GM12878 (cell line): ENCODE measurements at regions of chr17 and their contacts with region 1.

Region 1: DNA sequence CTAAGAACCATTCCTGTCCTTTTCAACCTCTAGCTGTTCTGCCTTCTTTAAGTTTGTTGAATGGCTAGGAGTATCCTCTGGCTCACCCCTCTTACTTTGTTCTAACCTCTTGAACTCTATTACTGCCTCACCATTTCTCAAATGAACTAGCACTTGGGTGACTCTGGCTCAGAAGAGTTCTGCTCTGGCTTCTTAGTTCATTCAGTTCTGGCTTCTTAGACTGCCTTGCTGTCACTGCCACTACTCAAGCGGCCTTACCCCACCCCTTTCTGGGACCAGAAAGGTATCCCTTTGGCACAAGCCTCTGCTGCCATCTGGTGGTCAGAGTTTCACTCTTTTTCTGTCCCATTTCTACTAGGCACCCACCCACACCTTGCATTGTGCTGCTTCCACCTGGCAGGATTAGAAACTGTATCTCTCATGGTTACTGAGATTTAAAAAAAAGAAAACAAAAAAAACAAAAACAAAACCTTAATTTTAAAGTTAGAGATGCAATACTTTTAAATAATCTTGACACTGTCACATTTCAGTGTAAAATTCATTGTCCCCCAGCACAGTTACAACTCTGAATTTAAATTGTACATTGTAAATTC is 6.8 kb upstream of the ABCA10 start:
- DNase-seq: peak; percentile 79
- ATAC-seq: peak; percentile 100
- H3K4me3 ChIP-seq: no peak overlapping the region
- H3K27ac ChIP-seq: 0 out of 2 replicates have a peak overlapping the region, but pooled peaks have one; percentile 27
- H3K4me1 ChIP-seq: peaks cover 4% of the 10 kb centered on the region; the same call in 1 of the 2 replicates
- H3K27me3 ChIP-seq: no peaks in the 10 kb centered on the region
- CTCF ChIP-seq: peak; percentile 71 to 89 (median 83)
- EP300 ChIP-seq: no peak
- POLR2A ChIP-seq: no peak
- RAD21 ChIP-seq: peak; percentile 97

Region 2: DNA sequence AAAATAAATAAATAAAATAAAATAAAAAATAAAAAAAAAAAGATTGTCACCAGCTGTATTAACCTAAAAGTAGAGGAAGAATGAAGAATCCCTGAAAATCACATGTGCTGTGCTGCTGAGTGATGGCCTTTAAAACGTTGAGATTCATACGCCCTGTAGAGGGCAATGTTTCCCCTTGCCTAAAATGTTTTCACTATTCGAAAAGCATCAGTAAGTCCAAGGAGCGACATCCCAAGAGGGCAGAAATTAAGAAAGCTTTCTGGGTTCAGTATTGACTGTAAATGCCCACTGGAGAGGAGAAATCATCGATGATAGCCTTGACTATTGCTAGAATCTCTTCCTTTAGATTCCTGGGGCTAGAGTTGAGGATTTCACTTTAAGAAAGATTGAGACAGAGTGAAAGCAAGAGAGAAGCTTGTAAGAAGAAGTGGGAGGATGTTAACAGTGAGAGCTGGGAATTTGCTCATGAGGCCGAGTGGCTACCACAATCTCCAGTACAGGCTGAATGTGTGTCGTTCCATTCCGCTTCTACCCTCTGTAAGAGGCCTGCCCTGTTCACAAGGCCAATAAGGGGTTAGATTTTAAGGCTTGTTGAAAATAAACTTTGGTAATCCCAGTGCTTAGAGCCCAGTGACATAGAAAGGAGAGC is 463.4 kb before region 1 on chr17:
- CTCF ChIA-PET with region 1: interaction called, 54 read pairs
- POLR2A ChIA-PET with region 1: interaction called, 3 read pairs
- RAD21 ChIA-PET with region 1: interaction called, 13 read pairs
- SMC1A ChIA-PET with region 1: interaction called, 29 read pairs
- in situ Hi-C with region 1: loop called (anchors 5 kb)
- intact Hi-C with region 1: loop called (anchors 1 kb)
- DNase-seq: no peak
- ATAC-seq: peak; percentile 90
- H3K4me3 ChIP-seq: peak overlapping the region; percentile 61
- H3K27ac ChIP-seq: peak overlapping the region; percentile 46
- H3K4me1 ChIP-seq: peaks cover 15% of the 10 kb centered on the region
- H3K27me3 ChIP-seq: no peaks in the 10 kb centered on the region
- CTCF ChIP-seq: peak; percentile 62 to 80 (median 76)
- EP300 ChIP-seq: no peak
- POLR2A ChIP-seq: no peak
- RAD21 ChIP-seq: peak; percentile 81

Region 3: GRCh38 chr17:68794636-68795434 is 440.6 kb before region 1 on chr17:
- CTCF ChIA-PET with region 1: interaction called, 22 read pairs
- POLR2A ChIA-PET with region 1: no interaction called
- RAD21 ChIA-PET with region 1: interaction called, 8 read pairs
- SMC1A ChIA-PET with region 1: interaction called, 10 read pairs
- in situ Hi-C with region 1: no loop called
- intact Hi-C with region 1: loop called (anchors 1 kb)
- DNase-seq: no peak
- ATAC-seq: peak; percentile 72
- H3K4me3 ChIP-seq: peak overlapping the region; percentile 7; the same call in 1 of the 2 replicates
- H3K27ac ChIP-seq: peak overlapping the region; percentile 38
- H3K4me1 ChIP-seq: peaks cover 4% of the 10 kb centered on the region; the same call in 1 of the 2 replicates
- H3K27me3 ChIP-seq: no peaks in the 10 kb centered on the region
- CTCF ChIP-seq: peak; percentile 10 to 41 (median 33); a peak in 3 of 6 replicates
- EP300 ChIP-seq: no peak
- POLR2A ChIP-seq: no peak
- RAD21 ChIP-seq: peak; percentile 48

Region 4: DNA sequence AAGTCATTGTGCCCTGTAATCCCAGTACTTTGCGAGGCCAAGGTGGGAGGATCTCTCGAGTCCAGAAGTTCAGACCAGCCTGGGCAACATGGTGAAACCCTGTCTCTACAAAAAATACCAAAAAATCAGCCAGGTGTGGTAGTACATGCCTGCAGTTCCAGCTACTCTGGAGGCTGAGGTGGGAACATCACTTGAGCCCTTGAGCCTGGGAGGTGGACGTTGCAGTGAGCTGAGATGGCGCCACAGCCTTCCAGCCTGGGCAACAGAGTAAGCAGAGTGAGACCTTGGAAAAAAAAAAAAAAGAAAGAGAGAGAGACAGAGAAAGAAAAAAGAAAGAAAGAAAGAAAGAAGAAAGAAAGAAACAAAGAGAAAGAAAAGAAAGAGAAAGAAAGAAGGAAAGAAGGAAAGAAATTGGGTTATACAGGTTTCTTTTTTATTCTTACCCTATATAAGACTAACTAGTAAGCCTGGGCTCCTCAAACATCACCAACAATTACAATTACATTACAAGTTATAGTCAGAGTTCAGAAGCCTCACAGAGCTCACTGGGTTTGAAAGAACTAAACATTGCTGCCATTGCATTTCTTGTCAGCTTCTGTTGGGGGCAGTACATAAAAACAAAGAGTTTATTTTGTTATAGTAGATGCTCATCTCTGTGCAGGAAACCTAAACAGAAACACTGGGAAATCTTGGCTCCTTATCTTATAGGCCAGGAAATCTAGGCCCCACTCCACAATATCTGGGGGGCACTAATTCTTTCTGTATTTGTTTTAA is 168.0 kb before region 1 on chr17:
- CTCF ChIA-PET with region 1: interaction called, 5 read pairs
- POLR2A ChIA-PET with region 1: interaction called, 3 read pairs
- RAD21 ChIA-PET with region 1: interaction called, 11 read pairs
- SMC1A ChIA-PET with region 1: interaction called, 6 read pairs
- in situ Hi-C with region 1: no loop called
- intact Hi-C with region 1: no loop called
- DNase-seq: no peak
- ATAC-seq: peak; percentile 47; the same call in 2 of the 3 replicates
- H3K4me3 ChIP-seq: no peak overlapping the region
- H3K27ac ChIP-seq: no peak overlapping the region
- H3K4me1 ChIP-seq: no peaks in the 10 kb centered on the region
- H3K27me3 ChIP-seq: no peaks in the 10 kb centered on the region
- CTCF ChIP-seq: peak; percentile 12 to 28 (median 15); a peak in 3 of 6 replicates
- EP300 ChIP-seq: no peak
- POLR2A ChIP-seq: no peak
- RAD21 ChIP-seq: peak; percentile 23; the same call in 1 of the 2 replicates

Region 5: GRCh38 chr17:69223809-69224208 is 11.6 kb before region 1 on chr17:
- CTCF ChIA-PET with region 1: interaction called, 9 read pairs
- POLR2A ChIA-PET with region 1: no interaction called
- RAD21 ChIA-PET with region 1: interaction called, 5 read pairs
- SMC1A ChIA-PET with region 1: interaction called, 14 read pairs
- in situ Hi-C with region 1: no loop called
- intact Hi-C with region 1: no loop called
- DNase-seq: peak; percentile 33
- ATAC-seq: peak; percentile 95
- H3K4me3 ChIP-seq: no peak overlapping the region
- H3K27ac ChIP-seq: no peak overlapping the region
- H3K4me1 ChIP-seq: peaks cover 8% of the 10 kb centered on the region
- H3K27me3 ChIP-seq: no peaks in the 10 kb centered on the region
- CTCF ChIP-seq: no peak
- EP300 ChIP-seq: no peak
- POLR2A ChIP-seq: no peak
- RAD21 ChIP-seq: no peak

Region 6: DNA sequence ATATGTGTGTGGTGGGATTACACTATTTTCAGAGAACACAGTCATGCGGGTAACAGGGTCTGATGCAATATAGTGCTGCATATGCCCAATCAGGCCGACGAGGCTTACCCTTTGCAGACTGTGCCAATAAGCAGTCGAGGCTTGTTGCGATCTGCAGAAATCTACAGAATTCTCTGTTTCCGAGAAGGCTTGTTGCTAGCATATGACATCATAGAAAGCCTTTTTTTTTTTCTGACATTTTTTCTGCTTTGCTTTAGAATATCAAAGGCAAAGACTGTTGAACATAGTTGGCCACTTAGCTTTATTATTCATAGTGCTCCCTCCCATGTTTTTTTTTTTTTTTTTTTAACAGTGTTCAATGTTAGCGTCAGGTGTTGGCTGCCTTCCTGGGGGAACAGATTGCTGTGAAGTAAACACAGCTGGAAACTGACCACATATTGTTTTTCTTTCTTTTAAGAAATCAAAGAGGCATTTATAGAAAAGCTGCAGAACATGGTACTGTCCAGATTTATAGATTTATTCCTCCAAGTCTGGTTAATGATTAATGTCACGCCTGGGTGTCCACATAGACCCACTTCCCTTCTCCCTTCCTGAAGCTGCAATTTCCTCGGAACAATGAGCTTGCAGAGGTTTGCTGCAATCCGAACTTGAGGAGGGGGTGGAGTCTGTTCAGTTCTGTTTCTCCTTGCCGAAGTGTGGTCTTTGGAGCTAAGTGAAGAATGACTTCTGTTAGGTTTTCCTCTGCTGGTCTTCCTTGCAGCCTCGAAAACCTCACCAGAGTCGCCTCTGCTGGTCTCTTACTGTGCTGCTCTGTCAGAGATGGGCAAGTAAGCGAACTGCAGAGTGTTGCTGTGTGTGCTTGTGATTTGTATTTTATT is 266.4 kb after region 1 on chr17:
- CTCF ChIA-PET with region 1: no interaction called
- POLR2A ChIA-PET with region 1: no interaction called
- RAD21 ChIA-PET with region 1: no interaction called
- SMC1A ChIA-PET with region 1: no interaction called
- in situ Hi-C with region 1: no loop called
- intact Hi-C with region 1: no loop called
- DNase-seq: no peak
- ATAC-seq: peak; percentile 54
- H3K4me3 ChIP-seq: peak overlapping the region; percentile 70
- H3K27ac ChIP-seq: peak overlapping the region; percentile 88
- H3K4me1 ChIP-seq: peaks cover 25% of the 10 kb centered on the region
- H3K27me3 ChIP-seq: no peaks in the 10 kb centered on the region
- CTCF ChIP-seq: 0 out of 6 replicates have a peak, but pooled peaks of 1 of the 3 experiments have one; percentile 8
- EP300 ChIP-seq: 0 out of 4 replicates have a peak, but pooled peaks of 1 of the 2 experiments have one; percentile 18
- POLR2A ChIP-seq: no peak
- RAD21 ChIP-seq: no peak